SK-N-SH (cell line): ENCODE measurements at regions of chr1 and their contacts with region 1.

Region 1: GRCh38 chr1:206583707-206584648 is 28.3 kb downstream of the EIF2D start:
- DNase-seq: peak; percentile 84
- H3K4me3 ChIP-seq: peak overlapping the region in 1 of 2 experiments; percentile 17; a peak in 1 of 4 replicates
- H3K27ac ChIP-seq: no peak overlapping the region
- H3K4me1 ChIP-seq: peaks cover 8 to 9% of the 10 kb centered on the region in 2 experiments; a peak in 3 of 4 replicates
- H3K27me3 ChIP-seq: no peaks in the 10 kb centered on the region
- CTCF ChIP-seq: peak; percentile 93
- EP300 ChIP-seq: no peak
- RAD21 ChIP-seq: peak; percentile 85

Region 2: DNA sequence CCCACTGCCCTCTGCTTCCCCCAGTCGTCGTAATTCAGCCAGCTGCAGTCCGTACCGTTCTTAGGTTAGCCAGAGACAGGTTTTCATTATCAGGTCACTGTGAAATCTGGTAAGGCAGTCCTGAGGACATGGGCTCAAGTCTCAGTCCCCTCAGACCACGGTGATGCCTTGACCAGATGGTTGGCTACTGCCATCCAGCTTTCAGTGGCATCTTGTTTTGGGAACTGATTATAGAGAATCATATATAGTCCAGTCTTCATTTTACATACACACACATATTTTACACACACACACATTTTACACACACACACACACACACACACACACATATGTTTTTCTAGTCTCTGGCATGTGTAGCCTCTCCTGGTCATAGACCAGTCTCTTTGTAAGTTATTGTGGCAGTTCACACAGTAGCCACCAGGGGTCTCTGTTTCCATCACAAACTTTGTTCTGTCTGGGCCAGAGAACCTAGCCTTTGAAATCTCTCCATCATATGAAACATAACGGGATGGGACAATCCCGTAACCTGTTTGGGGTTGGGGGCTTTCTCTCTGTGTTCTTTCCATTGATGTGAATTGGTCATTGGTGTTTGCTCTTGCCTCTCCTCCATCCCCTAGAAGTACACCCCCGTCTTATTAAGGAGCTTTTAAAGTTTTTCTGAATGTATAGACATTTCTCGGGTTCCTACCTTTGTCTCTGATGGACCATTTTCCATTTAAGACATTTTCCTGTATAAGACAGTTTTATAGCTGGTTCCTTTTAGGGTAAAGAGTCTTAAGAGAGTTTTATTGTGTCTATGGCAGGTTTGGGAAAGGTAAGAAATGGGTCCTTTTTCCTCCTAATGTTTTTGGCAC is 122.1 kb before region 1 on chr1:
- CTCF ChIA-PET with region 1: interaction called, 18 read pairs
- POLR2A ChIA-PET with region 1: interaction called, 4 read pairs
- DNase-seq: peak; percentile 76
- H3K4me3 ChIP-seq: no peak overlapping the region; a peak in 1 of 4 replicates
- H3K27ac ChIP-seq: no peak overlapping the region
- H3K4me1 ChIP-seq: peaks cover 13 to 19% of the 10 kb centered on the region in 2 experiments
- H3K27me3 ChIP-seq: no peaks in the 10 kb centered on the region
- CTCF ChIP-seq: peak; percentile 89
- EP300 ChIP-seq: no peak
- RAD21 ChIP-seq: peak; percentile 72

Region 3: GRCh38 chr1:206479183-206480125 is 104.5 kb before region 1 on chr1:
- CTCF ChIA-PET with region 1: interaction called, 85 read pairs
- POLR2A ChIA-PET with region 1: no interaction called
- DNase-seq: peak; percentile 89
- H3K4me3 ChIP-seq: no peak overlapping the region
- H3K27ac ChIP-seq: no peak overlapping the region
- H3K4me1 ChIP-seq: peaks cover 12% of the 10 kb centered on the region in 2 experiments; a peak in 3 of 4 replicates
- H3K27me3 ChIP-seq: no peaks in the 10 kb centered on the region
- CTCF ChIP-seq: peak; percentile 80
- EP300 ChIP-seq: no peak
- RAD21 ChIP-seq: peak; percentile 85

Region 4: DNA sequence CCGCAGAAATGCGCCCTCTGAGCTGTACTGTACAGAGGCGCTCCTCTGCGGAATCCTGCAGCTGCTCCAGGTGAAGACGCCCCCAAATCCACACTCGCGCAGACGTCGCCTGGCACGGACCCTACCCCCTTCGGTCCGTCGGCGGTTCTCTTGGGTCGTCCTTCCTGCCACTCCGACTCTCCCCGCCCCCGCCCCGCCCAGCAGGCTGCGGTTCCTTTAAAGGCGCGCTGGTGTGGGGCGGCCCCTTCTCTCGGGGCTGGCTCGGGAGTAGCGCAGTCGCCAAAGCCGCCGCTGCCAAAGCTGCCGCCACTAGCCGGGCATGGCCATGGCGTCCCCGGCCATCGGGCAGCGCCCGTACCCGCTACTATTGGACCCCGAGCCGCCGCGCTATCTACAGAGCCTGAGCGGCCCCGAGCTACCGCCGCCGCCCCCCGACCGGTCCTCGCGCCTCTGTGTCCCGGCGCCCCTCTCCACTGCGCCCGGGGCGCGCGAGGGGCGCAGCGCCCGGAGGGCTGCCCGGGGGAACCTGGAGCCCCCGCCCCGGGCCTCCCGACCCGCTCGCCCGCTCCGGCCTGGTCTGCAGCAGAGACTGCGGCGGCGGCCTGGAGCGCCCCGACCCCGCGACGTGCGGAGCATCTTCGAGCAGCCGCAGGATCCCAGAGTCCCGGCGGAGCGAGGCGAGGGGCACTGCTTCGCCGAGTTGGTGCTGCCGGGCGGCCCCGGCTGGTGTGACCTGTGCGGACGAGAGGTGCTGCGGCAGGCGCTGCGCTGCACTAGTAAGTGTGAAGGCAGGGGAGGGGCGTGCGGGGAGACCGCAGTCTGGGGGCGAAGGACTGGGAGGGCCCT is 76.5 kb before region 1 on chr1 and contains the start of gene RASSF5:
- CTCF ChIA-PET with region 1: interaction called, 26 read pairs
- POLR2A ChIA-PET with region 1: no interaction called
- DNase-seq: peak; percentile 77
- H3K4me3 ChIP-seq: peak within 1 kb of the TSS; percentile 64 to 65
- H3K27ac ChIP-seq: no peak within 1 kb of the TSS
- H3K4me1 ChIP-seq: peaks cover 10 to 16% of the 10 kb centered on the region in 2 experiments; a peak in 2 of 4 replicates
- H3K27me3 ChIP-seq: no peaks in the 10 kb centered on the region
- CTCF ChIP-seq: no peak
- EP300 ChIP-seq: no peak
- RAD21 ChIP-seq: no peak
- polyA plus RNA-seq, gene RASSF5: 1.7 and 2.2 TPM in 2 replicates

Region 5: DNA sequence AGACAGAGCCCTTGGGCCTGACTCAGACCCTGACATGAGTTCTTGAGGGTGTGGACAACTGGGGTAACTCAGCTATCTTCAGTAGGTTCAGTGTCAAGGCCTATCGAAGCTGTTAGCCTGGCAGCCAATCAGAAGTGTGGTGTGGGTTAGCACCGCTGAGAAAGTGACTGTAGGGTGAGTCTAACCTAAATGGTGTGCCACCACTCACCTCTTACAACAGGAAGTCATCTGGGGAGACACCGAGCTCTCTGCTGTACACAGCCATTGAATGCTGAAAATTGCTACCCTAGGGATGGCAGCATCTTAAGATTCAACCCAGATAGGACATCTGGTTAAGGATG is 32.0 kb before region 1 on chr1:
- CTCF ChIA-PET with region 1: interaction called, 241 read pairs
- POLR2A ChIA-PET with region 1: no interaction called
- DNase-seq: no peak
- H3K4me3 ChIP-seq: no peak overlapping the region
- H3K27ac ChIP-seq: no peak overlapping the region
- H3K4me1 ChIP-seq: peaks cover 0 to 4% of the 10 kb centered on the region in 2 experiments; a peak in 2 of 4 replicates
- H3K27me3 ChIP-seq: no peaks in the 10 kb centered on the region; the same call in 1 of the 2 replicates
- CTCF ChIP-seq: no peak
- EP300 ChIP-seq: no peak
- RAD21 ChIP-seq: no peak

Region 6: GRCh38 chr1:206563367-206564207 is 20.4 kb before region 1 on chr1:
- CTCF ChIA-PET with region 1: interaction called, 22 read pairs
- POLR2A ChIA-PET with region 1: no interaction called
- DNase-seq: no peak
- H3K4me3 ChIP-seq: no peak overlapping the region
- H3K27ac ChIP-seq: no peak overlapping the region
- H3K4me1 ChIP-seq: no peaks in the 10 kb centered on the region
- H3K27me3 ChIP-seq: no peaks in the 10 kb centered on the region
- CTCF ChIP-seq: no peak
- EP300 ChIP-seq: no peak
- RAD21 ChIP-seq: no peak

Region 7: DNA sequence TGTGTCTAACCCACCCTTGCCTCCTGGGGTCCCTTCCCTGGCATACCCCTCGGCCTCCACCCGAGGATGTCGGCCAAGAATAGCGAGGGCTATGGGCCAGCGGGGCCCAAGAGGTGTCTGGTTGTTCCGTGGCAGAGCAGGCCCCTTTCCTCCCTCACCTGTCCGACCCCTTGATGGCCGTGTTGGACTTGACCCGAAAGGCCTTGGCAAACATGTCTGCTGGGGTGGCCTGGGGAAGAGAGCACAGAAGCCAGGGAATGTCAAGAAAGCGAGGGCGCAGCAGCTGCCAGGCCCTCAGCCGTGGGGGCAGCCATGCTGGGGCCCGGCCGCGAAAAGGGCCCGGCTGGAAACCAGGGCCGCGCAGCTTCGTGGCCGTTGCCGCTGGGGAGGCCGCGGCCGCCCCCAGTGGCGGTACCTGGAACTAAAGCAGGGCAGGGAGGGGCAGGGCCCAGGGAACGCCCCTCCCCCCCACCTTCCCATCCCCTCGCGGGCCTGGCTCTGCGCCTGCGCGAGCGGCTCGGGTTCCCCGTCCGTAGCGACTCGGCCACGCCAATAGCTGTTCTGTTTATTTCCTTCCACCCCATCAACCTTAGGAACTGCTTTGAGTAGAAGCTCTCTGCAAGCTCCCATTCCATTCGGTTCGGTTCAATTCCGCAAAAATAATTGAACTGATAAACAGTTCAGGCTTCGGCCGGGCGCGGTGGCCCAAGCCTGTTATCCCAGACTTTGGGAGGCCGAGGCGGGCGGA is 28.3 kb after region 1 on chr1 and contains the start of gene EIF2D:
- CTCF ChIA-PET with region 1: interaction called, 26 read pairs
- POLR2A ChIA-PET with region 1: no interaction called
- DNase-seq: peak; percentile 100
- H3K4me3 ChIP-seq: peak within 1 kb of the TSS; percentile 81 to 94
- H3K27ac ChIP-seq: peak within 1 kb of the TSS; percentile 83 to 90
- H3K4me1 ChIP-seq: peaks cover 0 to 8% of the 10 kb centered on the region in 2 experiments; a peak in 2 of 4 replicates
- H3K27me3 ChIP-seq: no peaks in the 10 kb centered on the region
- CTCF ChIP-seq: peak; percentile 77
- EP300 ChIP-seq: peak in 1 of 2 experiments; percentile 44; a peak in 1 of 4 replicates
- RAD21 ChIP-seq: no peak
- polyA plus RNA-seq, gene EIF2D: 59.5 and 83.2 TPM in 2 replicates

Region 8: GRCh38 chr1:206734499-206735142 is 150.6 kb after region 1 on chr1:
- CTCF ChIA-PET with region 1: no interaction called
- POLR2A ChIA-PET with region 1: no interaction called
- DNase-seq: peak; percentile 83
- H3K4me3 ChIP-seq: no peak overlapping the region; a peak in 1 of 4 replicates
- H3K27ac ChIP-seq: no peak overlapping the region
- H3K4me1 ChIP-seq: peaks cover 0 to 2% of the 10 kb centered on the region in 2 experiments; a peak in 1 of 4 replicates
- H3K27me3 ChIP-seq: no peaks in the 10 kb centered on the region
- CTCF ChIP-seq: peak; percentile 72
- EP300 ChIP-seq: no peak
- RAD21 ChIP-seq: peak; percentile 85